ENCODE measurements at regions of chr20 and their contacts with region 1.

Region 1: GRCh38 chr20:62671765-62672164 is 29.5 kb downstream of the SLCO4A1 start:
- DNase-seq: no peak
- H3K4me3 ChIP-seq: no peak overlapping the region
- H3K27ac ChIP-seq: no peak overlapping the region
- H3K4me1 ChIP-seq: peaks cover 6 to 23% (median 9%) of the 10 kb centered on the region in 4 donors
- H3K27me3 ChIP-seq: peaks cover 0 to 20% (median 0%) of the 10 kb centered on the region in 3 donors
- CTCF ChIP-seq: no peak
- EP300 ChIP-seq: no peak
- POLR2A ChIP-seq: no peak

Region 2: DNA sequence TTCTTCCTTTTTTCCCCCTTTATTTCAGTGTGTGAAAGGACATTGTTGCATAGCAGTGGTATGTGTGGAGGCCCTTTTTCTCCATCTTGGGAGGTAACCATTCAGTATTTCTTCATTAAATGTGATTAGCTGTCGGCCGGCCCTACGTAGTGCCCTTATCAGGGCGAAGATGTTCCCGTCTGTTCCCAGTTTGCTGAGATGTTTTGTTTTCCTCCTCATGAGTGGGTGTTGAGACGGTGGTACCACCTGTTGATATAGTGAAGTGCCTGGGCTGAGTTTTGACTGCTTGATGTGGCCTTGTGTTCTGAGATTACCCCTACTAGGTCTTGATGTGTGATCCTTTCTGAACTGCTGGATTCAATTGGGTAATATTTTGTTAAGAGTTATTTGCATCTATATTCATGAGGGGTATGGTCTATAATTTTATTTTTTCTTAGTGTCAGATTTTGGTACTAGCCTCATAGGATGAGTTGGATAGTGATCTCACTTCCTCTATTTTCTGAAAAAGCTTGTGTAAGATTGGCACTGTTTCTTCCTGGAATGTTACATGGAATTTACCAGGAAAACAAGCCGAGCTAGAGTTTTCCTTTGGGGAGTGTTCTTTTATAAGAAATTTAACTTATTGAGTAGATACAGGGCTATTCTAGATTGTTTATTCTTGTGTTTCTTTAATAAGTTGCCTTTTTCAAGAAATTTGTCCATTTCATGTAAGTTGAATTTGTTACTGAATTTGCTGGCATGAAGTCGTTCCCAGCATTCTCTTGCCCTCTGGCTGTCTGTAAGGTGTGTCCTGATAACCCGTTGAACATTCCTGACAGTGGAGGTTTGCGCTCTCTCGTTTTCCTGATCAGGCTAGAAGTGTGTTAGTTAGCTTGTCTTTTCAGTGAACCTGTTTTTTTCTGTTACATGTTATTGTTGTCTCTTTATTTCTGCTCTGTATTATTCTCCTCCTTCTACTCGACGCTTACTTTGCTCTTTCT is 484.6 kb before region 1 on chr20:
- intact Hi-C with region 1: no loop called
- DNase-seq: peak in 1 of 2 donors; percentile 50
- H3K4me3 ChIP-seq: no peak overlapping the region
- H3K27ac ChIP-seq: peak overlapping the region in 2 of 5 donors; percentile 18 to 34
- H3K4me1 ChIP-seq: peaks cover 15 to 50% (median 31%) of the 10 kb centered on the region in 4 donors
- H3K27me3 ChIP-seq: no peaks in the 10 kb centered on the region
- CTCF ChIP-seq: no peak
- EP300 ChIP-seq: no peak
- POLR2A ChIP-seq: no peak

Region 3: DNA sequence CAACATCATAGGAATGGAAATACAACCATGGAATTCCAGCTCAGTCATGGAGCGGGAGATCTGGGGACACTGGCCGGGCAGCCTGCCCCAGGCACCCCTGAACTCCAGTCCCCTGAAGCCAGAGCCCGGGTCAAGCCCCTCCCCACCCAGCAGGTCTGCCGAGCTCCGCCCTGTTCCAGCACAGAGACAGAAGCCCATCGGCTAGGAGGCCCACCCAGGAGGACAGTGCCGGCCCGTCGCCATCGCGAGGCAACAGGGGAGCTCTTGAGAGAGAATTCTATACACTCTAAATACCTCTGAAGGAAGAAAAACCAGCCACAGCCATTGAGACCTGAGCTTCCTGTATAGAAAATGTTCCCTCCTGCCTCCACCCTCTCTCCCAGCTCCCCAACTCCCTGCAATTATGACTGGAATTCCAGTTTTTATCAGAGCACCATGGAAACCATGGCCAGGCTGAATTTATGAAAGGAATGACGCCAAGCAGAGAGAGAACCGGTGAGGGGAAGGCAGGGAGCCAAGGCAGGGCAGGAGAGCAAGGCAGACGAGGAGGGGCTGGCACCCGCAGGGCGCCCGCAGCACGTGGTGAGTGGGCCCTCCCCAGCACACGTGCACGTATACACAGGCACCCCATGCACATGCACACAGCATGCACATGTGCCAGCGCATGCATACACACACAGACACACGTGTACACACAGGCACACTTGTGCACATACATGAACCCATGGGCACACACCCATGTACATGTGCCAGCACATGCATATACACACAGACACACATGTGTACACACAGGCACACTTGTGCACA is 96.9 kb after region 1 on chr20:
- intact Hi-C with region 1: no loop called
- DNase-seq: peak; percentile 82 to 91
- H3K4me3 ChIP-seq: no peak overlapping the region
- H3K27ac ChIP-seq: peak overlapping the region; percentile 24 to 67 (median 59)
- H3K4me1 ChIP-seq: peaks cover 8 to 33% (median 24%) of the 10 kb centered on the region in 4 donors
- H3K27me3 ChIP-seq: peaks cover 0 to 49% (median 12%) of the 10 kb centered on the region in 3 donors
- CTCF ChIP-seq: no peak
- EP300 ChIP-seq: no peak
- POLR2A ChIP-seq: no peak

Region 4: GRCh38 chr20:62782149-62782892 is 110.6 kb after region 1 on chr20:
- intact Hi-C with region 1: loop called (anchors 5 kb)
- DNase-seq: no peak
- H3K4me3 ChIP-seq: no peak overlapping the region
- H3K27ac ChIP-seq: no peak overlapping the region
- H3K4me1 ChIP-seq: peaks cover 0 to 7% (median 0%) of the 10 kb centered on the region in 4 donors
- H3K27me3 ChIP-seq: peaks cover 0 to 26% (median 0%) of the 10 kb centered on the region in 3 donors
- CTCF ChIP-seq: no peak
- EP300 ChIP-seq: no peak
- POLR2A ChIP-seq: no peak

Region 5: GRCh38 chr20:62861726-62862336 is 190.1 kb after region 1 on chr20 and contains the start of gene TCFL5:
- intact Hi-C with region 1: no loop called
- DNase-seq: peak; percentile 93 to 95
- H3K4me3 ChIP-seq: peak within 1 kb of the TSS; percentile 45 to 56 (median 50)
- H3K27ac ChIP-seq: peak within 1 kb of the TSS; percentile 29 to 78 (median 56)
- H3K4me1 ChIP-seq: peaks cover 8 to 22% (median 17%) of the 10 kb centered on the region in 4 donors
- H3K27me3 ChIP-seq: peaks cover 0 to 4% (median 0%) of the 10 kb centered on the region in 3 donors
- CTCF ChIP-seq: no peak
- EP300 ChIP-seq: no peak
- POLR2A ChIP-seq: no peak
- total RNA-seq, gene TCFL5: 3.0 to 29.5 (median 9.5) TPM

Measured in stomach (tissue), 19 donors.